ENCODE measurements at regions of chr1 and their contacts with region 1.

Region 1: DNA sequence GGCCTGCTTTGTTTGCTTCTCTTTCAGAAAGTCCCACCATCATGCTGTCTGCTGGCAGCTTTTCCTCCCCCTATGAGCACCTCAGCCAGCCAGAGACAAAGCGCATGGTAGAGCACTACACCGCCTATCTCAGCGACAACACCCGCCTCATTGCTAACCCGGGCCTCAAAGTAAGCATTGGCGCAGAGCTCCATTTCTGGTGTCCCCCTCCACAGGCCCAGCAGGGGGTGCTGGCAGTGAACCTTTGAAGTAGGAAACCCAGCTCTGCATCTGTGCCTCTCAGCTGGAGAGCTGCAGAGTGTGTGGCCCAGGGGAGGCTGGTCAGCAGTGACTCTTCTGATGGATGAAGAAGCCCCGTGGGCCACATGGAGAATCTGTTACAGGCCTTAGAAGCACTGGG is 81.2 kb upstream of the RAVER2 start:
- DNase-seq: no peak
- ATAC-seq: peak; percentile 68
- H3K4me3 ChIP-seq: no peak overlapping the region
- H3K27ac ChIP-seq: no peak overlapping the region
- H3K4me1 ChIP-seq: no peaks in the 10 kb centered on the region
- H3K27me3 ChIP-seq: no peaks in the 10 kb centered on the region
- CTCF ChIP-seq: peak in 2 of 3 experiments; percentile 6 to 18; a peak in 2 of 6 replicates
- EP300 ChIP-seq: no peak
- POLR2A ChIP-seq: no peak
- RAD21 ChIP-seq: 0 out of 2 replicates have a peak, but pooled peaks have one; percentile 24

Region 2: GRCh38 chr1:64598100-64598571 is 65.5 kb before region 1 on chr1:
- CTCF ChIA-PET with region 1: no interaction called
- POLR2A ChIA-PET with region 1: no interaction called
- RAD21 ChIA-PET with region 1: no interaction called
- SMC1A ChIA-PET with region 1: no interaction called
- in situ Hi-C with region 1: no loop called
- intact Hi-C with region 1: no loop called
- DNase-seq: no peak
- ATAC-seq: no peak
- H3K4me3 ChIP-seq: no peak overlapping the region
- H3K27ac ChIP-seq: no peak overlapping the region
- H3K4me1 ChIP-seq: no peaks in the 10 kb centered on the region
- H3K27me3 ChIP-seq: no peaks in the 10 kb centered on the region; a peak in 1 of 4 replicates
- CTCF ChIP-seq: no peak
- EP300 ChIP-seq: no peak
- POLR2A ChIP-seq: no peak
- RAD21 ChIP-seq: no peak

Region 3: GRCh38 chr1:64675718-64676345 is 12.2 kb after region 1 on chr1:
- CTCF ChIA-PET with region 1: interaction called, 40 read pairs
- POLR2A ChIA-PET with region 1: no interaction called
- RAD21 ChIA-PET with region 1: no interaction called
- SMC1A ChIA-PET with region 1: interaction called, 3 read pairs
- in situ Hi-C with region 1: no loop called
- intact Hi-C with region 1: no loop called
- DNase-seq: no peak
- ATAC-seq: peak; percentile 40; the same call in 1 of the 3 replicates
- H3K4me3 ChIP-seq: no peak overlapping the region
- H3K27ac ChIP-seq: no peak overlapping the region
- H3K4me1 ChIP-seq: no peaks in the 10 kb centered on the region
- H3K27me3 ChIP-seq: no peaks in the 10 kb centered on the region
- CTCF ChIP-seq: peak; percentile 43 to 66 (median 47)
- EP300 ChIP-seq: no peak
- POLR2A ChIP-seq: no peak
- RAD21 ChIP-seq: peak; percentile 36

Region 4: GRCh38 chr1:64755361-64755760 is 91.7 kb after region 1 on chr1:
- CTCF ChIA-PET with region 1: no interaction called
- POLR2A ChIA-PET with region 1: no interaction called
- RAD21 ChIA-PET with region 1: no interaction called
- SMC1A ChIA-PET with region 1: no interaction called
- in situ Hi-C with region 1: no loop called
- intact Hi-C with region 1: no loop called
- DNase-seq: no peak
- ATAC-seq: no peak
- H3K4me3 ChIP-seq: no peak overlapping the region
- H3K27ac ChIP-seq: no peak overlapping the region
- H3K4me1 ChIP-seq: no peaks in the 10 kb centered on the region
- H3K27me3 ChIP-seq: no peaks in the 10 kb centered on the region
- CTCF ChIP-seq: no peak
- EP300 ChIP-seq: no peak
- POLR2A ChIP-seq: no peak
- RAD21 ChIP-seq: no peak

Region 5: GRCh38 chr1:65009724-65010420 is 346.2 kb after region 1 on chr1:
- CTCF ChIA-PET with region 1: no interaction called
- POLR2A ChIA-PET with region 1: no interaction called
- RAD21 ChIA-PET with region 1: no interaction called
- SMC1A ChIA-PET with region 1: no interaction called
- in situ Hi-C with region 1: no loop called
- intact Hi-C with region 1: no loop called
- DNase-seq: no peak
- ATAC-seq: no peak
- H3K4me3 ChIP-seq: no peak overlapping the region
- H3K27ac ChIP-seq: no peak overlapping the region
- H3K4me1 ChIP-seq: no peaks in the 10 kb centered on the region
- H3K27me3 ChIP-seq: peaks cover 0 to 8% of the 10 kb centered on the region in 2 experiments; a peak in 2 of 4 replicates
- CTCF ChIP-seq: no peak
- EP300 ChIP-seq: no peak
- POLR2A ChIP-seq: no peak
- RAD21 ChIP-seq: no peak

Region 6: DNA sequence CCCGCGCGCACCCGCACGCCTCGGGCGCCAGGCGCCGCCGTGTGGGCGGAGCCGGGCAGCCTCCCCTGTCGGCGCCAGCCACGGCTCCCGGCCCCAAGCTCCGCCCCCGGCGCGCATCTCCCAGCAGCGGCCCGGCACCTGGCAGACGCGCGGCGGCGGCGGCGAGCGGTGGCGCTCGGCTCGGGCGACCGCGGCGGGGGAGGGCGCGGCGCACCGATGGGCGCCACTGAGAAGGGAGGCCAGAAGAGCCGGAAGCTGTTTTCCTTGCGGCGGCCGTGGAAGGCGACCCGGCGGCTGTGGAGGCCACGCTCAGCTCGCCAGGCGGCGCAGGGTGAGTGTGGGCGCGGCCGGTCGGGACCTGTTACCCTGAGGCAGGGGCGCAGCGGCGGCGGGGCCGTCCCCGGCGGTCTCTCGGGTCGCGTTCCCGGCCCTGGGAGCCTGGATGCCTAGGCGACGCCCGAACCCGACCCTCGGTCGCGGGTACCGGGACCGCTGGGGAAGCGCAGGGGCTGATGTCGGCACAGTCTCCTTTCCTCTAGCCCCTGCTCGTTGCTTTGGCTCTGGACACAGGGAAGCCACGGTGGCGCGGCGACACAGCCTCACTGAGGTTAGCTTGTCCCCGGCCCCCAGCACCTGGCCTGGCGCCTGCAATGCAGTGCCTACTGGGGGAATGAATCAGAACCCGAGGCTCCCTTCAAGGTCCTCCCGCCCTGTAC is 590.8 kb after region 1 on chr1:
- CTCF ChIA-PET with region 1: no interaction called
- POLR2A ChIA-PET with region 1: no interaction called
- RAD21 ChIA-PET with region 1: no interaction called
- SMC1A ChIA-PET with region 1: no interaction called
- in situ Hi-C with region 1: no loop called
- intact Hi-C with region 1: no loop called
- DNase-seq: no peak
- ATAC-seq: peak; percentile 99
- H3K4me3 ChIP-seq: peak overlapping the region; percentile 72
- H3K27ac ChIP-seq: no peak overlapping the region
- H3K4me1 ChIP-seq: no peaks in the 10 kb centered on the region; the same call in 1 of the 2 replicates
- H3K27me3 ChIP-seq: peaks cover 5 to 6% of the 10 kb centered on the region in 2 experiments; a peak in 3 of 4 replicates
- CTCF ChIP-seq: no peak; a peak in 1 of 6 replicates
- EP300 ChIP-seq: no peak
- POLR2A ChIP-seq: peak; percentile 74
- RAD21 ChIP-seq: no peak

Measured in GM12878 (cell line).